H1 (cell line): ENCODE measurements at regions of chr10 and their contacts with region 1.

Region 1: GRCh38 chr10:104925232-104925851 is 284.3 kb downstream of the SORCS3 start:
- DNase-seq: peak; percentile 13 to 71
- H3K4me3 ChIP-seq: no peak overlapping the region
- H3K27ac ChIP-seq: no peak overlapping the region
- H3K4me1 ChIP-seq: peaks cover 0 to 7% (median 2%) of the 10 kb centered on the region in 4 experiments; a peak in 6 of 7 replicates
- H3K27me3 ChIP-seq: no peaks in the 10 kb centered on the region
- CTCF ChIP-seq: peak; percentile 63 to 72 (median 66)
- EP300 ChIP-seq: no peak
- POLR2A ChIP-seq: no peak
- RAD21 ChIP-seq: peak; percentile 60 to 68

Region 2: GRCh38 chr10:104638861-104639589 is 286.3 kb before region 1 on chr10:
- CTCF ChIA-PET with region 1: interaction called, 11 read pairs
- POLR2A ChIA-PET with region 1: no interaction called
- DNase-seq: peak in 1 of 2 experiments; percentile 86
- H3K4me3 ChIP-seq: peak overlapping the region; percentile 50 to 71 (median 60)
- H3K27ac ChIP-seq: no peak overlapping the region
- H3K4me1 ChIP-seq: peaks cover 0 to 18% (median 7%) of the 10 kb centered on the region in 4 experiments; a peak in 4 of 7 replicates
- H3K27me3 ChIP-seq: peaks cover 32 to 65% (median 61%) of the 10 kb centered on the region in 4 experiments
- CTCF ChIP-seq: peak; percentile 75 to 82 (median 78)
- EP300 ChIP-seq: no peak
- POLR2A ChIP-seq: no peak
- RAD21 ChIP-seq: peak; percentile 80 to 86

Region 3: GRCh38 chr10:104650072-104650471 is 275.3 kb before region 1 on chr10:
- CTCF ChIA-PET with region 1: interaction called, 16 read pairs
- POLR2A ChIA-PET with region 1: interaction called, 3 read pairs
- DNase-seq: no peak
- H3K4me3 ChIP-seq: no peak overlapping the region
- H3K27ac ChIP-seq: no peak overlapping the region
- H3K4me1 ChIP-seq: no peaks in the 10 kb centered on the region
- H3K27me3 ChIP-seq: no peaks in the 10 kb centered on the region
- CTCF ChIP-seq: peak in 2 of 3 experiments; percentile 47 to 51; a peak in 2 of 4 replicates
- EP300 ChIP-seq: no peak
- POLR2A ChIP-seq: no peak
- RAD21 ChIP-seq: peak; percentile 71 to 75

Region 4: DNA sequence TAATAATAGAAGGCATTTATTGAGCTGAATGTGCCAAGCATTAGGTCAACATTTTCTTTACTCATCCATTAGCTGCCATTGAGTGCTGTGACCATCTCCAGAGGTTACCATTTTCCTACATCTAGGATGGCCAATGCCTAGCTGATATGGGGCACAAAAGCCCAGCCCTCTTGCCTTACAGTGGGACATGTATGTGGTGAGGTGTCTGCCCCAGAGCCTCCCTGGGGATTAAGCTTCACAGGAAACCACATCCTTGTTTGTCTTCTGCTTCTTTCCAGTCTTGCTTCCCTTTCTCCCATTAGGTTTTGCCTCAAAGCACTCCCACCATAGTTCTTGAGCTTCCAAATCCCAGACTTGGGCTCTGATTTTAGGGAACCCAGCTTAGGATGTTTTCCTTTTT is 25.6 kb before region 1 on chr10:
- CTCF ChIA-PET with region 1: interaction called, 18 read pairs
- POLR2A ChIA-PET with region 1: no interaction called
- DNase-seq: no peak
- H3K4me3 ChIP-seq: no peak overlapping the region
- H3K27ac ChIP-seq: no peak overlapping the region
- H3K4me1 ChIP-seq: no peaks in the 10 kb centered on the region
- H3K27me3 ChIP-seq: no peaks in the 10 kb centered on the region
- CTCF ChIP-seq: no peak
- EP300 ChIP-seq: no peak
- POLR2A ChIP-seq: no peak
- RAD21 ChIP-seq: no peak

Region 5: GRCh38 chr10:104910712-104911111 is 14.6 kb before region 1 on chr10:
- CTCF ChIA-PET with region 1: interaction called, 28 read pairs
- POLR2A ChIA-PET with region 1: no interaction called
- DNase-seq: no peak
- H3K4me3 ChIP-seq: no peak overlapping the region
- H3K27ac ChIP-seq: no peak overlapping the region
- H3K4me1 ChIP-seq: no peaks in the 10 kb centered on the region
- H3K27me3 ChIP-seq: no peaks in the 10 kb centered on the region
- CTCF ChIP-seq: no peak
- EP300 ChIP-seq: no peak
- POLR2A ChIP-seq: no peak
- RAD21 ChIP-seq: no peak

Region 6: GRCh38 chr10:104937572-104937971 is 12.2 kb after region 1 on chr10:
- CTCF ChIA-PET with region 1: interaction called, 12 read pairs
- POLR2A ChIA-PET with region 1: no interaction called
- DNase-seq: no peak
- H3K4me3 ChIP-seq: no peak overlapping the region
- H3K27ac ChIP-seq: no peak overlapping the region
- H3K4me1 ChIP-seq: no peaks in the 10 kb centered on the region
- H3K27me3 ChIP-seq: no peaks in the 10 kb centered on the region
- CTCF ChIP-seq: no peak
- EP300 ChIP-seq: no peak
- POLR2A ChIP-seq: no peak
- RAD21 ChIP-seq: no peak